PC-9 (cell line): ENCODE measurements at regions of chr18 and their contacts with region 1.

Region 1: DNA sequence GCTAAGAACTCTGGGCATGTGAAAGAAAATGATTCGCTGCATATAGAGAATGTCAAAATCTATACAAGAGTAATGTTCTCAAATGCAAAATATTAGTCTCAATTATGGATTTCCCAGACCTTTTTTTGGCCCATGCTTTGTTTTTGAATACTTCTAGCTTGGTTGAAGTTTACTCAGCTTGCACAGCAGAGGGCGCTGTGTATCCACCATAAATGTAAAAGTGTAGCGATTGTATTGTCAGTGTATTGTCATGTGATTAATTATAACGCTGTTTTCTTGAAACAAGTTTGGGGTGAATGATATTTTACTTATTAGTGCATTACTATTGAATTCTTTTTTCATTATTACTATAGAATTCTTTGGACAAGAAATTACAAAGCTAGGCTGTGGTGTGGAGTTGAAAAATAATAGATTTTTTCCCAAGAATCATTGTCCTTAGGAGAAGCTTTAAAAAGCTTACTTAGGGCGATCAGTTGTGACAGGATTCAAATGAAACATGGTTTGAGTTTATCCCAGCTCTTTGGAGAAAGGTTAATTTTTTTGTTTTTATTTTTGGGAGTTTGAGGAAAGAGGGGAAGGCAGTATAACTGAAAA is 98.3 kb downstream of the PIK3C3 start:
- DNase-seq: peak in 1 of 2 experiments; percentile 11
- H3K4me3 ChIP-seq: no peak overlapping the region
- H3K27ac ChIP-seq: no peak overlapping the region
- H3K4me1 ChIP-seq: peaks cover 4% of the 10 kb centered on the region
- H3K27me3 ChIP-seq: no peaks in the 10 kb centered on the region
- CTCF ChIP-seq: peak; percentile 82

Region 2: DNA sequence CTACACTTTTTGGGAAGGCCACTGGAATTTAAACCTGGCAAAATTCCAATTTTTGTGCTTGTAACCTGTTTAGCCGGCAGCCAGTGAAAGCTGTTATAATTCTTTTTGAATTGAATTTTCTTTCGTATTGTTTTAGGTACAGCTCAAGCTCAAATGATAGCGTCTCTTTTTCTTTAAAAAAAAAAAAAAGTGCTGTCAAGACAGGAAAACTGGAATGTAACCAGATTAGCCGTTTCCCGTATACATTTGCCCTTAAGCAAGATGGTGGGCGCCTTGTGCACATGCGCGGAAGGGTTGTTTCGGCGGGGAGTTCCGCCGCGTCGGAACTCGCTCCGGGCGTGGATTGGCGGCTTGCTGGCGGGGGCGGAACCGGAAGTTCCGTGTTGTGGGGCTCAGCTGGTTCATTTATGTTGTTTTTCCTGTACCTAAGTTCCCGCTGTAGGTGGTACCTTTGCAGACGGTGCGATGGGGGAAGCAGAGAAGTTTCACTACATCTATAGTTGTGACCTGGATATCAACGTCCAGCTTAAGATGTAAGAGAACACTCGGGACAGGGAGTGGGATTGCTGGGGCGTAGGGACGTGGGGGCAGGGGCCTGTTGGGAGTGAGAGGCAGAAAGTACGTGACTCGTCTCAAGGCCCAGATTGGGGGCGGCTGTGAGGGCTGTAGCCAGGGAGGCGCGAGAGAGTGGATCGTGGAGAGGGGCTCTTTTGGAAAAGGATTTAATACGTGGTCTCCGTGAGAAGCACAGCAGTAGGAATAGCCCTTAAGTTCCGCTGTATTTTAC is 98.3 kb before region 1 on chr18 and contains the start of gene PIK3C3:
- CTCF ChIA-PET with region 1: no interaction called
- POLR2A ChIA-PET with region 1: no interaction called
- intact Hi-C with region 1: no loop called
- DNase-seq: peak; percentile 87
- H3K4me3 ChIP-seq: peak within 1 kb of the TSS; percentile 96
- H3K27ac ChIP-seq: peak within 1 kb of the TSS; percentile 57
- H3K4me1 ChIP-seq: 0 out of 2 replicates have a peak, but pooled peaks cover 14% of the 10 kb centered on the region
- H3K27me3 ChIP-seq: no peaks in the 10 kb centered on the region
- CTCF ChIP-seq: no peak
- total RNA-seq, gene PIK3C3: 19.9 and 31.4 TPM in 2 replicates

Region 3: DNA sequence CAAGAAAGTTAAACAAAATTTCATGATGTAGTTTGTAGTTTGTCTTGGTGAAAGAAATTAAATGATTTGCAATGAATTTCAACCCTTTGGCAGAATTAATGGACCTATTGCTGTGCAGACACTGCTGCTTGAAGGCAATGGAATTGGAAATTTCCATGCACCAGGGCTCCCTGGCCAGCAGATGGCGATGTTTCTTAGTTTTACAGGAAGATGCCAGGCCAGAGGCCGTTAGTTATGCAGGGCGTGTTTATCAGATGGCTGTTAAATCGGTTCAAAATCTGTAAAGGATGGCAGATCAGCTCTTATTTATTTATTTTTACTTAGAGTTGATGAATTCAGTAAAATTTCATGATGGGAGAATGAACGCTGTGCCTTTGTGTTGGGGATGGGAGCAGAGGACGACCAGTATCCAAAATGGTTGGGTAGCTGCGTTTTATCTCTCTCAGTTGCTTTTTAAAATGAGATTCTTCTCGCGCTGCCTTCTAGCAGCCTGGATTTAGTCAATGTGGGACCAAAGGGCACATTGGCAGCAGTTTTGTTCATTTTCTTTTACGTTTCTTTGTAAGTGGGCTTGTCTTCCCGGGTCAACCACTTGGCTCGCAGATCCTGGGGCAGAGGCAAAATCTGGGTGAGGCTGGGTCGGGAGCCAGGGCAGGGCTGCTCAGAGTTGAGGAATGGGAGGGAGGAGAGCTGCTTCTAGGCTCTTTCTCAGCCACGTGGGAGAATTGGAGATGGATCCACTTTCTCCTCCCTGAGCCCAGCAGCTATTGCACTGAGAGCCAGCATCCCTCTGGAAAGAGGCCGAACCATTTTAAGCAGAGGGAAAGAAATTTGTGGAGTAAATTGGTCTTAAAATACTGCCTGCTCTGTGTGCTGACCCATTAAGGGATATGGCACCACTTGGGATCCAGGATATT is 245.7 kb after region 1 on chr18:
- CTCF ChIA-PET with region 1: no interaction called
- POLR2A ChIA-PET with region 1: no interaction called
- intact Hi-C with region 1: loop called (anchors 1 kb)
- DNase-seq: peak in 1 of 2 experiments; percentile 23
- H3K4me3 ChIP-seq: no peak overlapping the region
- H3K27ac ChIP-seq: no peak overlapping the region
- H3K4me1 ChIP-seq: no peaks in the 10 kb centered on the region
- H3K27me3 ChIP-seq: no peaks in the 10 kb centered on the region
- CTCF ChIP-seq: peak; percentile 77

Region 4: GRCh38 chr18:43271593-43272432 is 1218.5 kb after region 1 on chr18:
- CTCF ChIA-PET with region 1: no interaction called
- POLR2A ChIA-PET with region 1: no interaction called
- intact Hi-C with region 1: loop called (anchors 5 kb)
- DNase-seq: peak in 1 of 2 experiments; percentile 6
- H3K4me3 ChIP-seq: no peak overlapping the region
- H3K27ac ChIP-seq: no peak overlapping the region
- H3K4me1 ChIP-seq: no peaks in the 10 kb centered on the region
- H3K27me3 ChIP-seq: no peaks in the 10 kb centered on the region
- CTCF ChIP-seq: peak; percentile 78

Region 5: DNA sequence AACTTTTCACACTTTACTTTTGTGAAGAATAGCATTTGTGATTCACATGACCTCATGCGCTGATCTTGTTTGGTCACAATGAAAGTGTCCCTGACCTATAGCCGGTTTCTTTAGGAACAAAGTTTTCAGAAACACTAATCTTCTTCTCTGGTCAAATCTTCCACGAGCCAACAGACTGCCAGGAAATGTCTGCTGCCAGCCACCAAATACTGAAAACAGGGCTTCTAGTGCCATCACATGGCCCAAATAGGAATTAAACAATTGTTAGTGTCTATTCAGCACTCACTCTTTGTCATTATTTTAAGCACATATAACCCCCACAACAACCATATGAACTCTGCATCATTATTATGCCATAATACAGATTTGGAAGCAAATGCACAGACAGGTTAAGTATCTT is 1510.5 kb after region 1 on chr18:
- CTCF ChIA-PET with region 1: no interaction called
- POLR2A ChIA-PET with region 1: no interaction called
- intact Hi-C with region 1: loop called (anchors 10 kb)
- DNase-seq: peak in 1 of 2 experiments; percentile 0
- H3K4me3 ChIP-seq: no peak overlapping the region
- H3K27ac ChIP-seq: no peak overlapping the region
- H3K4me1 ChIP-seq: no peaks in the 10 kb centered on the region
- H3K27me3 ChIP-seq: no peaks in the 10 kb centered on the region
- CTCF ChIP-seq: peak; percentile 57

Region 6: DNA sequence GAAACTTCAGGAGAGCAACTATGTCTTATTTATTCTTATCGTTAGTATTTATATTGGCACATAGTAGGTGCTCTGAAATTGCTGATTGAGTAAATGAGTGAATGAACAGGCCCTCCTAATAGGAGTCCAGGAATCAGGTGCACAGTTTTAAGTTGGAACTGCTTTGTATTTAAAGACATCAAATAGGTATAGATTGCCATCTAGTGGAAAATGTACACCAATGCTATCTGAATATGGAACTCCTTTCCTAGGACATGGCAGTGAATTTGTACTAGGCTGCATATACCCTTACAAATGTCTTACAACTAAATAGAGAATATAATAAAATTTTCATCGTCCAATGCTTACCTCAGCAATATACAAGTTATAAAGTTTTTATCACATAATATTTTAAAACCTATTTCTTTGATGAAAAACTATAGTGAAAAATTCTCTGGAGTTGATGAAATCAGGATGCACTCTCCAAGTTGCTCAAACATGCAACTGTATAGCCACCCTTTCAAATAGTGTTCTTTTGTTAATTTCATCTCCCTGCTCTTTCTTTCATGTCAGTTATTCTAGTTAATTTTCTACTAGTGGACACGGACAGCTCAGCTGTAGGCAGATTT is 1542.9 kb after region 1 on chr18:
- CTCF ChIA-PET with region 1: interaction called, 3 read pairs
- POLR2A ChIA-PET with region 1: no interaction called
- intact Hi-C with region 1: loop called (anchors 10 kb)
- DNase-seq: no peak
- H3K4me3 ChIP-seq: no peak overlapping the region
- H3K27ac ChIP-seq: no peak overlapping the region
- H3K4me1 ChIP-seq: no peaks in the 10 kb centered on the region
- H3K27me3 ChIP-seq: no peaks in the 10 kb centered on the region
- CTCF ChIP-seq: peak; percentile 62